Right lobe of liver (tissue), 6 donors: ENCODE measurements at regions of chr17 and their contacts with region 1.

Region 1: DNA sequence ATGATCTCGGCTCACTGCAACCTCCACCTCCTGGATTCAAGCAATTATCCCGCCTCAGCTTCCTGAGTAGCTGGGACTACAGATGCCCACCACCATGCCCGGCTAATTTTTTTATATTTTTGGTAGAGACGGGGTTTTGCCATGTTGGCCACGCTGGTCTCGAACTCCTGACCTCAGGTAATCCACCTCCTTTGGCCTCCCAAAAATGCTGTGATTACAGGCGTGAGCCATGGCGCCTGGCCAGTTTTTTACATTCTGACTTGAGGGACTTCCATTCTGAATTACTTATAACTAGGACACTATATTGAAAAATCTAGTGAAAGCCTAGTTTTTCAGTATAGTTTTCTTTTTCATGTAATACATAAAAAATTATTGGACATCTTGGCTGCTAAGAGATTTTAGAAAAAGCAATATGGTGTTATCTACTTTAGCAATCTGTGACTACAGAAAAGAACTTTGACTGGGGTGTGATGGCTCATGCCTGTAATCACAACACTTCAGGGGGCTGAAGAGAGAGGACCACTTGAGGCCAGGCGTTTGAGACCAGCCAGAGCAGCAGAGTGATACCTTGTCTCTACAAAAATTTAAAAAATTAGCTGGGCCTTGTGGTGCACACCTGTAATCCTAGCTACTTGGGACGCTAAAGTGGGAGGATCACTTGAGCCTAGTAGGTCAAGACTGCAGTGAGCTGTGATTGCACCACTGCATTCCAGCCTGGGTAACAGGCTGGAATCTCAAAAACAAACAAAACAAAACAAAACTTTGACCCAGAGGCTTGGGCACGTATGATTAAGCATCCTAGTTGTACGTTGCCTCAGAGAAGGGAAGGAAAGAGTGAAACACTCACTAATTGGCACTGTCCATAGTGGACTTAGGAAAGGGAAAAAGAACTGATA is 26.8 kb upstream of the GOSR1 start:
- DNase-seq: peak in 2 of 3 donors; percentile 28 to 53
- ATAC-seq: peak; percentile 90 to 95 (median 94)
- H3K4me3 ChIP-seq: no peak overlapping the region
- H3K27ac ChIP-seq: peak overlapping the region in 1 of 3 donors; percentile 33
- H3K4me1 ChIP-seq: peaks cover 0 to 24% (median 9%) of the 10 kb centered on the region in 4 donors
- H3K27me3 ChIP-seq: no peaks in the 10 kb centered on the region
- CTCF ChIP-seq: no peak
- POLR2A ChIP-seq: no peak

Region 2: DNA sequence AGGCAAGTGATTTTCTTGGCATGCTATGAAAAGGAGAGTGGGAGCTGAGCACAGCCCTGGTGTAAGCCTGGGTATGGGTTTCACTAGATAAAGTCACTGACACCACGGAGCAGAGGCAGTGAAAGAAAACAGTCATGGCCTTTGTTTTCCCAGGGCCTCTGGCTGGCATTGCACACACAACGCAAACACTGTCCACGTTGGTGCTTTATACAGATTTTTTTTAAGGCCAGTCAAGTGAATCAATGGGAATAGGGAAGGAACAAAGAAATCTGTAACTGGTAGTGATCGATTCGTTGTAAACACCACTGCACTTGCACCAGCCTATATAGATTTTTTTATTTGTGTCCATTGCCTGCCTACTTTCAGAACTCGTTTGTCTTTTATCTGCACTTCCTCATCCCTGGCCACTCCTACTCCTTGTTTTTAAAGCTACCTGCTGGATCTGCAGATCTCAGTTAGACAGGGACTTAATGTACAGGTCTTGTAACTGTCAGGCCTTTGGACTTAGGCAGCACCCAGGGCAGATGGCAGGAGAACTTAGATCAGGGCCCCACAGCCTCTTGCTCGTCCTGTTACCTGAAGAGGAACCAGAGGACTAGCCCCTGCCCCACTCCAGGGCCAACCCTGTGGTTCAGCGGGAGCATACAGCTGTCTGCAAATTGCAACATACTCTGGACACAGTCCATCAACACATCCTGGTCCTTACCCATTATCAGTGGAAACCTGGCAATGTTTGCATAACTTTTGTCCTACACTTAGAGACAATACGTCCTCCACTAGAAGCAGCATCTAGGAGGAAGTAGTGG is 105.9 kb before region 1 on chr17:
- intact Hi-C with region 1: loop called in 1 of 2 experiments (anchors 10 kb)
- DNase-seq: peak; percentile 75 to 85 (median 85)
- ATAC-seq: peak; percentile 75 to 88 (median 86)
- H3K4me3 ChIP-seq: peak overlapping the region in 1 of 3 donors; percentile 0
- H3K27ac ChIP-seq: peak overlapping the region; percentile 53 to 72 (median 61)
- H3K4me1 ChIP-seq: peaks cover 0 to 41% (median 16%) of the 10 kb centered on the region in 4 donors
- H3K27me3 ChIP-seq: no peaks in the 10 kb centered on the region
- CTCF ChIP-seq: peak in 1 of 4 donors; percentile 0
- POLR2A ChIP-seq: peak; percentile 37